Heart left ventricle (tissue), 16 donors: ENCODE measurements at regions of chr6 and their contacts with region 1.

Region 1: GRCh38 chr6:138428944-138429598 is 25.0 kb downstream of the HEBP2 start:
- DNase-seq: no peak
- ATAC-seq: peak in 3 of 4 donors; percentile 8 to 43 (median 33)
- H3K4me3 ChIP-seq: peak overlapping the region in 4 of 12 donors; percentile 10 to 24 (median 12)
- H3K27ac ChIP-seq: peak overlapping the region in 11 of 12 donors; percentile 31 to 85 (median 64)
- H3K4me1 ChIP-seq: peaks cover 0 to 51% (median 20%) of the 10 kb centered on the region in 12 donors
- H3K27me3 ChIP-seq: no peaks in the 10 kb centered on the region
- CTCF ChIP-seq: peak; percentile 42 to 77 (median 65)
- POLR2A ChIP-seq: no peak

Region 2: GRCh38 chr6:138017166-138017757 is 411.8 kb before region 1 on chr6:
- intact Hi-C with region 1: no loop called
- DNase-seq: no peak
- ATAC-seq: no peak
- H3K4me3 ChIP-seq: no peak overlapping the region
- H3K27ac ChIP-seq: no peak overlapping the region
- H3K4me1 ChIP-seq: no peaks in the 10 kb centered on the region
- H3K27me3 ChIP-seq: no peaks in the 10 kb centered on the region
- CTCF ChIP-seq: no peak
- POLR2A ChIP-seq: no peak

Region 3: GRCh38 chr6:138499303-138500018 is 70.4 kb after region 1 on chr6 and contains the start of gene NHSL1:
- intact Hi-C with region 1: loop called in 2 of 10 experiments (anchors 5 to 10 kb)
- DNase-seq: no peak
- ATAC-seq: peak in 2 of 4 donors; percentile 36 to 54
- H3K4me3 ChIP-seq: peak within 1 kb of the TSS in 1 of 12 donors; percentile 9
- H3K27ac ChIP-seq: no peak within 1 kb of the TSS
- H3K4me1 ChIP-seq: peaks cover 0 to 34% (median 14%) of the 10 kb centered on the region in 12 donors
- H3K27me3 ChIP-seq: no peaks in the 10 kb centered on the region
- CTCF ChIP-seq: no peak
- POLR2A ChIP-seq: no peak
- total RNA-seq, gene NHSL1: 35.6 to 103 (median 51.7) TPM

Region 4: GRCh38 chr6:138517635-138518034 is 88.6 kb after region 1 on chr6:
- intact Hi-C with region 1: loop called in 2 of 10 experiments (anchors 5 to 10 kb)
- DNase-seq: peak in 2 of 5 donors; percentile 19 to 26
- ATAC-seq: peak in 3 of 4 donors; percentile 37 to 67 (median 51)
- H3K4me3 ChIP-seq: no peak overlapping the region
- H3K27ac ChIP-seq: no peak overlapping the region
- H3K4me1 ChIP-seq: peaks cover 0 to 44% (median 16%) of the 10 kb centered on the region in 12 donors
- H3K27me3 ChIP-seq: no peaks in the 10 kb centered on the region
- CTCF ChIP-seq: peak; percentile 25 to 64 (median 50)
- POLR2A ChIP-seq: no peak

Region 5: GRCh38 chr6:138588805-138589434 is 159.8 kb after region 1 on chr6:
- intact Hi-C with region 1: loop called (anchors 1 to 5 kb)
- DNase-seq: peak in 4 of 5 donors; percentile 46 to 60 (median 59)
- ATAC-seq: peak in 3 of 4 donors; percentile 32 to 58 (median 49)
- H3K4me3 ChIP-seq: no peak overlapping the region
- H3K27ac ChIP-seq: no peak overlapping the region
- H3K4me1 ChIP-seq: peaks cover 0 to 27% (median 10%) of the 10 kb centered on the region in 12 donors
- H3K27me3 ChIP-seq: no peaks in the 10 kb centered on the region
- CTCF ChIP-seq: peak; percentile 79 to 96 (median 92)
- POLR2A ChIP-seq: no peak

Region 6: DNA sequence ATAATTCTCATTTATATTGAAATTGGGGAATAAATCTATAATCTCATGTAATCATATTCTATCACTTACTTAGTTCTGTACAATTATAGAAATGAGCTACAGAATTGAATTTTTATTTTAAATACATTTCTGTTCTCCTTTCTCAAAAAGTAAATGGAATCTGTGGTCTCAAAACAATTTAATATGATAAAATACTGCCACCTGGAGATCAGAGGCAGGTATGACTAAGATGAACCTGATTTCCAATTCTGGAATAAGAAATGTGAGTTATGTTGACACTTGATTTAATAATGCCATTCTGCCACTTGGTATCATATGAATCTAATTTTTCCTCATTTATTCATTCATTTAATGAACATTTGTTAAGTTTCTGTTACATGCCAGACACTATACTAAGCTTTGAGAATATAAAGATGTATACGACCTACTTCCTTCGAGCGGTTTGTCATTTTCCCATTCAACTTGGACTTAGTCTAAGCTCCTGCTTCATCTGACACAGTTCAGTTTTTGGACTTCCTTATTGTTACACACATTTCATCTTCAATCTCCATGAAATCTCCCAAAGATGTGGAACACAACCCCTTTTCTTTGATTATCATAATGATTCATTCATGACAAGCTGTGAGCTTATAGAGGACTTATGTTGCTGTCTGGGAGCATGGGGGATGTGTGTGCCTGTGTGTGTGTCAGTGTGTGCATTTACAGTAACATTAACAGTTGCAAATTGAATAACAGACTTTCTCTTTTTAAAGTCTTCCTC is 337.0 kb after region 1 on chr6:
- intact Hi-C with region 1: loop called (anchors 5 to 10 kb)
- DNase-seq: no peak
- ATAC-seq: no peak
- H3K4me3 ChIP-seq: no peak overlapping the region
- H3K27ac ChIP-seq: no peak overlapping the region
- H3K4me1 ChIP-seq: no peaks in the 10 kb centered on the region
- H3K27me3 ChIP-seq: no peaks in the 10 kb centered on the region
- CTCF ChIP-seq: peak; percentile 61 to 80 (median 74)
- POLR2A ChIP-seq: no peak

Region 7: DNA sequence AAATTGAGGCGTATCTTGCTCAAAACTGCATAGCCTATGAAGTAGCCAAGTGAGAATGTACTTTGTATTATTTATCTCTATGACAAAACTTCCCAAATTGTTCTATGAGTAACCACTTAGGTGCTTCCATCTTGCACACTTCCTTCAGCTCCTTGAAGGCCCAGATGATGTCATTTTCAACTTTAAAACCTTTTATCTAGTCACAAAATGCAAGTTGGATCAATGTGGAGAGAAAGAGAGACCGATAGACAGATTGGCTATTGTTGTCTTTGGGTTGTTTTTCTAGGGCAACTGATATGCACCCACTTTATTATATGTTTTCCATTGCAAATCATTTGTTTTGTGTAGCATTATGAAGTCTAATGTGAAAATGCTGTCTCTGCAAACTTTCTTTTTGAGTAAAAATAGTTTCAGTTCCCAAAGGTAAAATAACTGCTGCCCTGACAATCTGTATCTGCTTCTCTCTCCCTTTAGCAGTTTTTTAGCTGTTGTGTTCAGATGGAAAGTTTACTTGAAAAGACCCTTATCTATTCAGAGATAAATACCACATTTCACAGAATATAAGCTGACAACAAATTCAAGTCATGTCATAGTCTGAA is 1019.1 kb after region 1 on chr6:
- intact Hi-C with region 1: no loop called
- DNase-seq: no peak
- ATAC-seq: no peak
- H3K4me3 ChIP-seq: no peak overlapping the region
- H3K27ac ChIP-seq: no peak overlapping the region
- H3K4me1 ChIP-seq: peaks cover 0 to 19% (median 0%) of the 10 kb centered on the region in 12 donors
- H3K27me3 ChIP-seq: no peaks in the 10 kb centered on the region
- CTCF ChIP-seq: no peak
- POLR2A ChIP-seq: no peak